A673 (cell line): ENCODE measurements at regions of chr1 and their contacts with region 1.

Region 1: DNA sequence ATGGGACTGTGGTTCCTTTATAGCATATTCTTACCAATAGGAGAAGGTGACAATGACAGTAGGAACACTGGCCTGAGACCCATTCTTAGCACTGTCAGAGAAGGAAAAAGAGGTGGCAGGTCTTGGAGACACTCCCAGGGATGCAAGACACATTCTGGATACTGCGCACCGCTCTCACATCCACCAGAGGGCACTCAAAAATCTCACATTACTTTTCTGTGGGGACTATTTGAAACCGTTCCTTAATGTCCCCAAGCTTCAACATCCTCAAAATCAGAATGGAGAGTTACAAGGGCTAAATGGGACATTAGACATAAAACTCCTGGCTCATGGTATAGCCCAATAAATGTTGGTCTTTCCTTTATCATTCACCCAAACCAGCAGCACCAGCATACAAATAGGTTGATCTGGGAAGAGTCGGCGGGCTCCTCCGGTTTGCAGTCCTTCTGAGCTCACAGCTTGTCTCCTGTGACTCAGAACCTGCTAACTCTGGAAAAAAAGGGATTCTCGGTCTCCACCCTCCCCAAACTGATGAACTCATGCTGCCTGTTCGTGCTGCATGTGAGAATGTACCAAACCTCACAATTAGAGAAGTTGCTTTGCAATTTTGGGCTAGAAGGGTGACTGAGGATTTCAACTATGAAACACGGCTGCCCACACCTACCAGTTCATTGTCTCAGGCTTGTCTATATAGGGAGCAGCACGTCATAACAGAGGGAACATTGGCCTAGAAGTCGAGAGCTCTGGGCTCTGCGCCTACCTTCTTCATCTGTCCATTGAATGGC is 40.2 kb downstream of the IL12RB2 start:
- DNase-seq: peak; percentile 67
- H3K4me3 ChIP-seq: no peak overlapping the region
- H3K27ac ChIP-seq: no peak overlapping the region
- H3K4me1 ChIP-seq: no peaks in the 10 kb centered on the region
- H3K27me3 ChIP-seq: no peaks in the 10 kb centered on the region
- CTCF ChIP-seq: peak; percentile 81

Region 2: GRCh38 chr1:67230539-67230938 is 117.3 kb before region 1 on chr1:
- CTCF ChIA-PET with region 1: interaction called, 3 read pairs
- POLR2A ChIA-PET with region 1: no interaction called
- intact Hi-C with region 1: loop called (anchors 5 kb)
- DNase-seq: no peak
- H3K4me3 ChIP-seq: no peak overlapping the region
- H3K27ac ChIP-seq: no peak overlapping the region
- H3K4me1 ChIP-seq: no peaks in the 10 kb centered on the region
- H3K27me3 ChIP-seq: no peaks in the 10 kb centered on the region
- CTCF ChIP-seq: no peak

Region 3: GRCh38 chr1:67332653-67333529 is 15.0 kb before region 1 on chr1:
- CTCF ChIA-PET with region 1: no interaction called
- POLR2A ChIA-PET with region 1: no interaction called
- intact Hi-C with region 1: no loop called
- DNase-seq: no peak
- H3K4me3 ChIP-seq: no peak overlapping the region
- H3K27ac ChIP-seq: no peak overlapping the region
- H3K4me1 ChIP-seq: no peaks in the 10 kb centered on the region
- H3K27me3 ChIP-seq: no peaks in the 10 kb centered on the region
- CTCF ChIP-seq: no peak